Endothelial cell of umbilical vein (primary cell): ENCODE measurements at regions of chr5 and their contacts with region 1.

Region 1: DNA sequence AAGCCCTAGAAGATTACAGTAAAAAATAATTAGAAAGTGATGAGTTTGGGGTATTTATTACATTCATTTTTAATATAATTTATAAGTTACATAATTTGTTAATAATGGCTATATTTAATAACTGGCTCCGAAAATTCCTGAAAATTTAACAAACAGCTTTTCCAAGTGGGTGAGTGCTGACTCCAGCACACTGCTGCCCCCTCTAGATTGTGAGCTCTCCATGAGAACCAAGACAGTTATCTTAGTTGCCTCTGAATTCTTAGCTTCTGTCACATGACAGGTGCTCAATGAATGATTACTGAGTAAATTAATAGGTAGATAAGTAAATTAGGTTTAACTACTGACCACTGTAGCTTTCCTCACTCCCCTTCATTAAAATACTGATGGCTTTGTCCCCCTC is 7.8 kb downstream of the KLHL3 start:
- DNase-seq: peak; percentile 43
- H3K4me3 ChIP-seq: no peak overlapping the region
- H3K27ac ChIP-seq: no peak overlapping the region
- H3K4me1 ChIP-seq: no peaks in the 10 kb centered on the region
- H3K27me3 ChIP-seq: no peaks in the 10 kb centered on the region
- CTCF ChIP-seq: peak in 1 of 2 donors; percentile 21
- POLR2A ChIP-seq: no peak

Region 2: DNA sequence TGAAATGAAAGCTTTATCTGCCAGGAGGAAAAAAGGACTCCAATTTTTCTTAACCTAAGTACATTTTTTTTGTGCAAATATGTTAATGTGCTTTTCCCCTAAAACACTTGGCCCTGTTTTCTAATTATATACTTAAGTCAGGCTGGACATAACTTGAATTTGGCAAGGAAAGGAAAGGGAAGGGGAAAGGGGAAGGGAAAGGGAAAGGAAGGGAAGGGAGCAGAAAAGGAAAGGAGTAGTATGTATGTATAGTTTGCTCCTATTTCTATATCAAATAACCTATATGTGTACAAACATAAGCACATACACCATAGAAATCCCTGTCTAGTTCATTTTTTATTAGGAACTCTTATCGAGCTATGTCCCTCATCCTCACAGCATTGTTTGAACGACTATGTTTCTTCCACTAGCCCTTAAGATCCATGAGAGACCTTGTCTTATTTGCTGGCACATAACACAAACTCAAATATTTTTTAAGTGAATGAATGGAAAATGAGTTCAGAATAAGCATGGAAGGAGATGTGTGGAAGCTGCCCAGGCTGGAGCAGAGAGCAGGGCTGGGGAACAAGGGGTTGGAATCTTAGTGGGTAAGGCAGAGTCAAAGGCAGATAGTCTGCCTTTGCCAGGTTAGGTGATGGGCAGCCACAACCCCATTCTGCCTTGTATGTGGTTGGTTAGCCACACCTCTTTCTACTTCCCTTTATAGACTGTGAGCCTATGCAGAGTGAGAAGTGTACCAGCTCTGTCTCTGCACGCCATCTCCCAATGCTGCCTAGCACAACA is 62.2 kb before region 1 on chr5:
- CTCF ChIA-PET with region 1: interaction called, 226 read pairs
- POLR2A ChIA-PET with region 1: no interaction called
- dilution Hi-C with region 1: no loop called
- intact Hi-C with region 1: no loop called
- DNase-seq: peak; percentile 15
- H3K4me3 ChIP-seq: no peak overlapping the region
- H3K27ac ChIP-seq: no peak overlapping the region
- H3K4me1 ChIP-seq: no peaks in the 10 kb centered on the region
- H3K27me3 ChIP-seq: no peaks in the 10 kb centered on the region
- CTCF ChIP-seq: no peak
- POLR2A ChIP-seq: no peak

Region 3: DNA sequence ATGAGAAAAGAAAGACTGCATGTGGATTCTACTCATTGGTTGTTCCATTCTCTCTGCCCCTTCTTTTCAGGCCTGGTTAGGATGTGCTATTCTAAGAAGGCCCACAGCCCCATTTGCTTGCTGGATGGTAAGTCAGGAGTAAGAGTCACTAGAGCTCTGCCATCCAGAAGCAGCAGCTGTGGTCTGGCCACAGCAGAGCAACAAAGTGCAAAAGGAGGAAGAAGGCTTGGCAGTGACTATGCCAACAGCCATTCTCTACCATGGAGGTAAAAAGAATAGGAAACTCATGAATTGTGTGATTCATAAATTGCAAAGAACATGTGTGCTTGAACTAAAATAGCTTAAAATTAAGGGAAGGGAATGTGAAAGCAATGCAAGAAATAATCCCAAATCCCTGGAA is 13.1 kb before region 1 on chr5:
- CTCF ChIA-PET with region 1: interaction called, 11 read pairs
- POLR2A ChIA-PET with region 1: no interaction called
- dilution Hi-C with region 1: no loop called
- intact Hi-C with region 1: no loop called
- DNase-seq: peak; percentile 60
- H3K4me3 ChIP-seq: no peak overlapping the region
- H3K27ac ChIP-seq: no peak overlapping the region
- H3K4me1 ChIP-seq: no peaks in the 10 kb centered on the region
- H3K27me3 ChIP-seq: no peaks in the 10 kb centered on the region
- CTCF ChIP-seq: no peak
- POLR2A ChIP-seq: no peak

Region 4: GRCh38 chr5:137822158-137822764 is 94.2 kb after region 1 on chr5:
- CTCF ChIA-PET with region 1: no interaction called
- POLR2A ChIA-PET with region 1: no interaction called
- dilution Hi-C with region 1: no loop called
- intact Hi-C with region 1: no loop called
- DNase-seq: peak; percentile 31
- H3K4me3 ChIP-seq: no peak overlapping the region
- H3K27ac ChIP-seq: no peak overlapping the region
- H3K4me1 ChIP-seq: no peaks in the 10 kb centered on the region
- H3K27me3 ChIP-seq: peaks cover 10 to 19% of the 10 kb centered on the region in 2 experiments
- CTCF ChIP-seq: peak; percentile 17 to 51
- POLR2A ChIP-seq: no peak